ENCODE measurements at regions of chr14 and their contacts with region 1.

Region 1: DNA sequence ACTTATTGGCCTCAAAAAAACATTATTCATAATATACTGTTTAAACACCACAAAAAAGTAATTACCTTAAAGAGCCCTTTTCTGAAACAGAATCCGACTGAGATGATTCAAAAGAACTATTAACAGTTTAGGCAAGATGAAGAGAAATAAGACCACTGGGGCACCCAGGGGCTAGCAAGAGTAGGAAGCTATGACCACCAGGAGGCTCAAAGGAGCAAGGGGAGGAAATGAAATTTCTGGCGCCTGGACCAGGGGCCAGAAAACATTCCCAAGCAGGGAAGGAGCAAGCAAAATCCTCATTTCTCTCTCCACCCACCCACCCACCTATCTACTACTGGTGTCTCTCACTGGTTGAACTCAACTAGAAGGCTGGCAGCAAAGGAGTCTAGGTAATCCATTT is 6.2 kb upstream of the DCAF4 start:
- DNase-seq: no peak
- H3K4me3 ChIP-seq: no peak overlapping the region
- H3K27ac ChIP-seq: no peak overlapping the region
- H3K4me1 ChIP-seq: no peaks in the 10 kb centered on the region
- H3K27me3 ChIP-seq: no peaks in the 10 kb centered on the region
- CTCF ChIP-seq: peak; percentile 31; the same call in 1 of the 2 replicates

Region 2: DNA sequence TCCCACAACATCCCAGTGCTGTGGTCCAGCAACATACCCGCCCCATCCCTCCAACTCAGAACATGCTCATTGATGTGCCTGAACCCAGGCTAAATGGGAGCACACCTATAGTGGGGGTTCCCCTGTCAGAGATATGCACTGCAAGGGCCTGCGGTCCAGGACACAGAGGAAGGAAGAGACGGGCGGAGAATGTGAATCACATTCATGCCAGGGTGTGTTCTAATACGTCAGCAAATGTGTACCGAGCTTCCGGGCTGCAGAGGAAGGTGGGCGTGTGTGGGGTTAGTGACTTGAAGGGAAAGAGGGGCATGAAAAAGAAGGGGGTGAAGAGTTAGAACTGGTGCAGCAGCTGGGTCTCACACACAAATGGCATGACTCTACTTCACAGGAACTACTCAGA is 109.8 kb before region 1 on chr14:
- CTCF ChIA-PET with region 1: no interaction called
- POLR2A ChIA-PET with region 1: interaction called, 15 read pairs
- intact Hi-C with region 1: no loop called
- DNase-seq: no peak
- H3K4me3 ChIP-seq: no peak overlapping the region
- H3K27ac ChIP-seq: no peak overlapping the region
- H3K4me1 ChIP-seq: peaks cover 5% of the 10 kb centered on the region
- H3K27me3 ChIP-seq: no peaks in the 10 kb centered on the region
- CTCF ChIP-seq: no peak

Region 3: GRCh38 chr14:73311708-73312030 is 391.7 kb after region 1 on chr14:
- CTCF ChIA-PET with region 1: no interaction called
- POLR2A ChIA-PET with region 1: no interaction called
- intact Hi-C with region 1: no loop called
- DNase-seq: no peak
- H3K4me3 ChIP-seq: no peak overlapping the region
- H3K27ac ChIP-seq: no peak overlapping the region
- H3K4me1 ChIP-seq: peaks cover 7% of the 10 kb centered on the region
- H3K27me3 ChIP-seq: no peaks in the 10 kb centered on the region
- CTCF ChIP-seq: no peak